SK-N-SH (cell line): ENCODE measurements at regions of chr1 and their contacts with region 1.

Region 1: DNA sequence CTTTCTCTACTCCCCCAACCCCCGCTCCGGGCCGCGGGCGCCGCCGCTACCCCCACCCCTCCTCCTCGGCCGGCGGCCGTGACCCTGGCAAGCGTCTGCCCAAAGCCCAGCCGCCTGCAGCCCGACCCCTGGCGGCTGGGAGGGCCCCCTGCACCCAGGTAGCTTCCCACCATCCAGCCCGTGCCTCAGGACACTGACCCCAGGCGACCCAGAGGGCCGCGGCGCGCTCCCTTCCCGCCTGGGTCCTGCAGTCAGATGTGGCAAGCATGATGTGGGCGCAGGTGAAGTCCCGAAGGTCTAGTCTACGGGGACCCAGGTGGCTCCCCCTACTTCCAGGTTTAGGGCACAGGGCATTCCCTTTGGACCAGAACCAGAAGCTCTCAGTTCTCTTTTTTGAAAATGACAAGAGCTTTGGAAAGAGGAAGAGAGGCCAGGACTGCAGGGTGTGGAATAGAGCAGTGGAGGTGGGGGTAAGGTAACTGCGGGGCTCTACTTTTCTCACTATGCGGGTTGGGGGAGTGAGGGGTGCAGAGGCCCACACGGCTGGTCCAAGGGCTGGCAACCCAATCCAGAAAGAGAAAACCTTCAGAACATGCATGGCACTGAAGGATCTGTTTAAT is at the start of gene DENND4B:
- DNase-seq: peak; percentile 99
- H3K4me3 ChIP-seq: peak within 1 kb of the TSS; percentile 85 to 91
- H3K27ac ChIP-seq: peak within 1 kb of the TSS; percentile 60 to 89
- H3K4me1 ChIP-seq: peaks cover 3 to 17% of the 10 kb centered on the region in 2 experiments; a peak in 2 of 4 replicates
- H3K27me3 ChIP-seq: no peaks in the 10 kb centered on the region
- CTCF ChIP-seq: peak; percentile 76
- EP300 ChIP-seq: 0 out of 4 replicates have a peak, but pooled peaks of 1 of the 2 experiments have one; percentile 20
- RAD21 ChIP-seq: peak; percentile 62
- polyA plus RNA-seq, gene DENND4B: 27.3 and 29.6 TPM in 2 replicates

Region 2: DNA sequence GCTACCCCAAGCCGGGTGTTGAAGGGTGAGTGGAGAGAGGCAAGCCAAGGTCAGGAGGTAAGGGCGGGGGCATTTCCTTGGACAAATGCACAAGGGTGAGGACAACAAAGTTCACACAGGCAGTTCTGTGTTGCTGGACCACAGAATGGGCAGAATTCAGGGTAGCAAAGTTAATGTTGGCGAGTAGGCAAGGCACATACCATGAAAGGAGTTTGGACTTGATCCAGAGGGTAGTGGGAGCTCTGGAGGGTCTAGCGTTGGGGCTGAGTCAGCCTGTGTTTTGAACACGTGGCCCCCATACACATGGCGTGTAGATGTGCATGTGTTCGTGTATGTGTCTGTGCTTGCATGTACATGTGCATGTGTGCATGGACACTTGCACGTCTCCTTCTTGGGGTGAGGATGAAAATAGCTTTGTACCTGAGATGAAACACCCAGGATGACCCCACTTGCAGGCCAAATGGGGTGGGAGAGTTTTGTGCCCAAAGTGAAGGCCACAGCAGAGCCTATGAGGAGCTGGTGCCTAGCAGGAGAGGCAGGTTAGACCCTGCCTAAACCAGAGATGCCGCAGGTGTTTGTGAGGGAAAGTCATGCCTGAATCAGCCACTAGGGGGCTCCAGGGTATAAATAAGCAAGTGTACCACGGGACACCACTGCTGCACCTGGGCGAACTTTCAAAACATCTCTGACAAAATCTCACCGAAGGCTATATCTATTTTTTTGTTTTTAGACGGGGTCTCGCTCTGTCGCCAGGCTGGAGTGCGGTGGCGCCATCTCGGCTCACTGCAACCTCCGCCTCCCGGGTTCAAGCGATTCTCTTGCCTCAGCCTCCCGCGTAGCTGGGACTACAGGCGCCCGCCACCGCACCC is 149.7 kb before region 1 on chr1:
- CTCF ChIA-PET with region 1: interaction called, 24 read pairs
- POLR2A ChIA-PET with region 1: no interaction called
- DNase-seq: peak; percentile 90
- H3K4me3 ChIP-seq: no peak overlapping the region; a peak in 1 of 4 replicates
- H3K27ac ChIP-seq: no peak overlapping the region
- H3K4me1 ChIP-seq: no peaks in the 10 kb centered on the region; a peak in 1 of 4 replicates
- H3K27me3 ChIP-seq: no peaks in the 10 kb centered on the region
- CTCF ChIP-seq: peak; percentile 85
- EP300 ChIP-seq: no peak
- RAD21 ChIP-seq: peak; percentile 84

Region 3: GRCh38 chr1:153827168-153827964 is 119.4 kb before region 1 on chr1:
- CTCF ChIA-PET with region 1: interaction called, 15 read pairs
- POLR2A ChIA-PET with region 1: no interaction called
- DNase-seq: no peak
- H3K4me3 ChIP-seq: no peak overlapping the region
- H3K27ac ChIP-seq: no peak overlapping the region
- H3K4me1 ChIP-seq: no peaks in the 10 kb centered on the region
- H3K27me3 ChIP-seq: no peaks in the 10 kb centered on the region
- CTCF ChIP-seq: peak; percentile 35; the same call in 1 of the 2 replicates
- EP300 ChIP-seq: no peak
- RAD21 ChIP-seq: no peak

Region 4: DNA sequence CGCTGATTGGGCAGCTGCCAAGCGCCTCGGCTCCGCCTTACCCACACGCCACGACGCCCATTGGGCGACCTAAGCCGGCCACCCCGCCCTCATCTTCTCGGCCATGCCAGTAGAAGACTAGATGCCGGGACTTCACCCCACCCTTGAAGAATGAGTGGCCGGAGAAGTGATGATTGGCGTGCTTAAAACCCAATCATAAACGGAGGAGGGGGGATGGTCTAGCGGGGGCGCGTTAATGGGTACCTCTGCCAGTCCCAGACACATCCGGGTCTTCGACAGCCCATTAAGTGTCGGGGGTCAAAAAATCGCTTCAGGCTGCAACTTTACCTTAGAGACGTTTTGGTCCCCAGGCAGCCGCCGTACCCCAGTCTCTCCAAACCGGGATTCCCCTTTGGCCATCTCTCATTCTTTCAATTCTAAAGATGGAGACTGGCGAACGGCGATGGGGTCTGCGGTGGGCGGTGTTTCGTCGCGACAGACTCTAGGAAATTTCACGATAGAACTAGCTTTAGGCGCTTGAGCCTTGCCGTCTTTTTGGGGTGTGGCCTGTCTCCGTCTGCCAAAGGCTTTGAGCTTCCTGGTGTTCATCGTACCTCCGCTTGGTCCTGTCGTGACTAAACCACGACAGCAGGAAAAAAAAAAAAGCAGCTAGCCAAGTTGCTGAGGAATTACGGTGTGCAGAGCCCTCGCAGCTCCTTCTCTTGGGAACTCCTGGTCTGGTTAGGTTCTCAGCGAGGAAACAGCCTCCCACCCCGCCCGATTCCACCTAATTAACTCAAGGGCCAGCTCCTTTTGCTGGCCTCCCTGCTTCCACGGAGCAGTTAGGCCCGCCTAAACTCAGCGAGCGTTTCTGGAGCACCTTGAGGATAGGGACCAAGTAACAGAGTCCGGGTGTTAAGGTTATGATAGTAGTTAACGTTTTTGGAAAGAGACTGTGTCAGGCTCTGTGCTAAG is 23.5 kb before region 1 on chr1 and contains the start of gene GATAD2B:
- CTCF ChIA-PET with region 1: interaction called, 46 read pairs
- POLR2A ChIA-PET with region 1: interaction called, 6 read pairs
- DNase-seq: peak; percentile 96
- H3K4me3 ChIP-seq: peak within 1 kb of the TSS; percentile 74 to 90
- H3K27ac ChIP-seq: peak within 1 kb of the TSS; percentile 85 to 95
- H3K4me1 ChIP-seq: peaks cover 17 to 25% of the 10 kb centered on the region in 2 experiments
- H3K27me3 ChIP-seq: no peaks in the 10 kb centered on the region
- CTCF ChIP-seq: no peak
- EP300 ChIP-seq: 0 out of 4 replicates have a peak, but pooled peaks of 1 of the 2 experiments have one; percentile 20
- RAD21 ChIP-seq: peak; percentile 41
- polyA plus RNA-seq, gene GATAD2B: 2.7 and 2.8 TPM in 2 replicates

Region 5: DNA sequence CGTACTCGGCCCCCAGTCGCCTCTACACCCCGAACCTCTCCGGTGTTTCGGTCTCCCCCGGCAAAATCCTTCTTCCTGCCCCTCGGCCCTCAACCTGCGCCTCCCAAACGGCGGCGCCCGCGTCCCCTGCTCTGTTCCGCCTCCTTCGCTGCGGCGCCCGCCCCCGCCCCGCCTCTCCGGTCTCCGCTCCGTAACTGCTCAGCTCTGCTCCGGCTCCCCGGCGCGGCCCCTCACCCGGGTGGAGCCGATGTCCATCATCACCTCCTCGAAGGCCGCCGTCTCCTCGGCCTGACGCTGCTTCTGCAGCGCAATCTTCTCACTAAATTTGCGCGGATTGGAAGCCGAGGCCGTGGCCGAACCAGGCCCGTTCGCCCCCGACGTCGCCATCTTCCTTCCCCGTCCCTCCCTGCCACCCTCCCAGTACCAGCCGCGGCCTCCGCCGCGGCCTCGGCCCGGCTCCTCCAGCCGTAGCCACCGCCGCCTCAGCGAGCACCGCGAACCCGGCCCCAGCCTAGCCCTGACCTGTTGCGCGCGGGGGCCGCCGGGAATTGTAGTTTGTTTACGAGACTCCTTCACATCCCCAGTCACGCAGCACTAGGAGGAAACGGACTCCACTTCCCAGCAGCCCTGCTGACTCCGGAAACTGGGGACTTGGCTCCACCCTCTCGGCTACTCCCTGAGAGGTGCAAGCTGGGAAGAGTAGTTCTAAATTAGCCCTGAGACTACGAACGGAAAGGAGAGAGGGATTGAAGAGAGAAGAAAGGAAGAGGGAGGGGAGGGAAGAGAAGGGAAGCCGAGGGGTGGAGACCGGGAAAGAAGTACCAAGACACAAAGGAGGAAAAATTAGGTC is 11.6 kb after region 1 on chr1 and contains the start of gene CRTC2:
- CTCF ChIA-PET with region 1: interaction called, 51 read pairs
- POLR2A ChIA-PET with region 1: interaction called, 6 read pairs
- DNase-seq: peak; percentile 97
- H3K4me3 ChIP-seq: peak within 1 kb of the TSS; percentile 69 to 95
- H3K27ac ChIP-seq: peak within 1 kb of the TSS; percentile 88 to 96
- H3K4me1 ChIP-seq: peaks cover 5 to 53% of the 10 kb centered on the region in 2 experiments; a peak in 3 of 4 replicates
- H3K27me3 ChIP-seq: no peaks in the 10 kb centered on the region
- CTCF ChIP-seq: 0 out of 2 replicates have a peak, but pooled peaks have one; percentile 15
- EP300 ChIP-seq: no peak
- RAD21 ChIP-seq: no peak
- polyA plus RNA-seq, gene CRTC2: 25.5 and 26.2 TPM in 2 replicates